Posterior cingulate gyrus (tissue), 11 donors: ENCODE measurements at regions of chr12 and their contacts with region 1.

Region 1: GRCh38 chr12:120469450-120470149 is at the start of gene SRSF9:
- DNase-seq: peak; percentile 93 to 99 (median 96)

Region 2: DNA sequence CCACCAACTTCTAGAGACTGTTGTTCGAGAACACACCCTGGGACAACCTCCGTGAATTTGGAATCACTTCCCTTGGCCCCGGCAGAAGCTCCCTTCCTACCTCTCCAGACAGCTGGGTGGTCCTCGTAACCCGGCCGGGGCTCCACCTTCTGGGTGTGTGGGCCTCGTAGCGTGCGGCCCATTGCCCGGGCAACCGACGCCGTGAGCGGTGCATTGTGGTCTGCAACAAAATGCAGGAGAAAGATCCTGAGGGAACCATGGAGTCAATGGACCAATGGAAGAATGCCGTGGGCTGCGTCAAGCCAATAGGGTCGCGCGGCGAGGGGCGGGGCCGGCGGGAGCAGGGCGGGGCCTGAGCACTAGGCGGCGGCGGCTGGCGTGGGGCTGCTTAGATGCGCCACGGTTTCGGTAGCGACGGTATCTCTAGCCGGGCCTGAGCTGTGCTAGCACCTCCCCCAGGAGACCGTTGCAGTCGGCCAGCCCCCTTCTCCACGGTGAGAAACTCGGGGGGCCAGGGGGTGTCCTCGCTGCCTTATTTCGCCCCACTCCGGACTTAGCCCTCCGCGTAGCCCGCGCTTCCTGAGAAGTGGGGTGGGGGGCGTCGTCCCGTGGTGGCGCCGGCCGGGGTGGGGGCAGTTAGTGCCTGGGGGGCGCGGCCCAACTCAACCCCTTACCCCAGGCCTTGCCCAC is 26.3 kb after region 1 on chr12 and contains the start of gene DYNLL1:
- intact Hi-C with region 1: loop called (anchors 1 kb)
- DNase-seq: peak; percentile 93 to 100 (median 96)

Region 3: GRCh38 chr12:120534203-120534702 is 64.7 kb after region 1 on chr12 and contains the start of gene RNF10:
- intact Hi-C with region 1: loop called (anchors 10 kb)
- DNase-seq: peak; percentile 60 to 96 (median 74)